ENCODE measurements at regions of chr7 and their contacts with region 1.

Region 1: GRCh38 chr7:36487756-36488336 is 98.2 kb downstream of the ANLN start:
- DNase-seq: peak; percentile 43 to 54
- H3K4me3 ChIP-seq: no peak overlapping the region
- H3K4me1 ChIP-seq: no peaks in the 10 kb centered on the region
- H3K27me3 ChIP-seq: peaks cover 9% of the 10 kb centered on the region

Region 2: DNA sequence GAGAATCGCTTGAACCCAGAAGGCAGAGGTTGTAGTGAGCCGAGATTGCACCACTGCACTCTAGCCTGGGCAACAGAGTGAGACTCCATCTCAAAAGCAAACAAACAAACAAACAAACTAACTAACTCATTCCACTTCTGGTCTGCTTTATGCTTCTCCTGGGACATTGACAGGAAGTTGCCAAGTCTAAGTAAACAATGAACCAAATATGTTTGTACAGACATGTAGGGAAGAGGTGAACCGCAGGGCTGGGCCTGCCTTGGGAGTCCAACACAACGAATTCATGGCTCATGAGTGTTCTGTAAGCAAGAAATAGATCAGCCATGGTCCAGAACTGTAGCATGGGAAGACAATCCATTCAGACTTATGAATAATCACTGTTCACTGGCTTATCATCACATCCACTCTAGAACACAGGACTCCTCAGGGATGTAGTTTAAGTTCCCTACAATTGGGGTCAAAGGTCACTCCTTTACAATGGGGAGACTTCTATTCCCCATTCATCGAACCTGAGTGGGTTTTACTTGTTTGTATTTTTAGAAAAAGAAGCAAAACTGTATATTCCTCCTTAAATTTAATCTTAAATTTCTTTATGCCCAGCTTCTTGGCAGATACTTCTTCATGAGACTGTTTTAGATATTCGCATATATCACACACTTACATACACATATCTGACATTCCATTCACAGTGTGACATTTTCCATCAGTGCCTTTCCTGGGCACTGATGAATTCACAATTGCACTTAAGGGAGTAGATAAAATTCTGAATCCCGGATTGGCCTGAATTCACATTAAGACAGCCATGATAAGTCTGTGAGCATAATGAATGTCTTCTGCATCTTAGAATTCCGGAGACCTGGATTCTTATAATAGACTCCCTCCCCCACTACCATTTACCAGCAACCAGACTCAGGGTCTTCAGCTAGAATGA is 493.9 kb before region 1 on chr7:
- in situ Hi-C with region 1: no loop called
- DNase-seq: no peak
- H3K4me3 ChIP-seq: no peak overlapping the region
- H3K4me1 ChIP-seq: no peaks in the 10 kb centered on the region
- H3K27me3 ChIP-seq: no peaks in the 10 kb centered on the region

Region 3: GRCh38 chr7:36128448-36129047 is 359.3 kb before region 1 on chr7:
- in situ Hi-C with region 1: no loop called
- DNase-seq: peak in 1 of 2 experiments; percentile 22
- H3K4me3 ChIP-seq: no peak overlapping the region
- H3K4me1 ChIP-seq: no peaks in the 10 kb centered on the region
- H3K27me3 ChIP-seq: no peaks in the 10 kb centered on the region

Region 4: DNA sequence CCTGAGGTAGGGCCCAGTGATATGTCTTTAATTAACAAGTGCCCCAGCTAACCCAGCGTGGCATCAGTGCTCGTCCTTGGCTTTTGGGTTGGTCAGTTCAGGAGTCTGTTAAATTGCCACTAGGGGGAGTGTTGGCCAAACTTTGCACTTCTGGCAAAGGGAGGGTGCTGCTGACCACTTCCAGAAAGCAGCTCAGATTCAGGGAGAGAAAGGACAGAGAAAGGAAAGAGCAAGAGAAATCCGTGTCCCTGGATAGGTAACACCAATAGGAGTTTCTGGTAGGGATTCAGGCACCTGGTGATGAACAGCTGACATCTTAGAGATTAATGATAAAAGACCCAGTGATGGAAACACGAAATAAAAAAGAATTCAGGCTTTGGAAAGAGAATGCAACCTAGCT is 479.5 kb after region 1 on chr7:
- in situ Hi-C with region 1: loop called (anchors 25 kb)
- DNase-seq: peak; percentile 58 to 71
- H3K4me3 ChIP-seq: no peak overlapping the region
- H3K4me1 ChIP-seq: no peaks in the 10 kb centered on the region
- H3K27me3 ChIP-seq: no peaks in the 10 kb centered on the region